SK-N-SH (cell line): ENCODE measurements at regions of chr11 and their contacts with region 1.

Region 1: GRCh38 chr11:35485656-35486322 is 39.6 kb downstream of the PAMR1 start:
- DNase-seq: peak; percentile 72
- H3K4me3 ChIP-seq: no peak overlapping the region; a peak in 1 of 4 replicates
- H3K27ac ChIP-seq: no peak overlapping the region
- H3K4me1 ChIP-seq: peaks cover 0 to 2% of the 10 kb centered on the region in 2 experiments; a peak in 1 of 4 replicates
- H3K27me3 ChIP-seq: no peaks in the 10 kb centered on the region
- CTCF ChIP-seq: peak; percentile 91
- EP300 ChIP-seq: no peak
- RAD21 ChIP-seq: peak; percentile 79

Region 2: DNA sequence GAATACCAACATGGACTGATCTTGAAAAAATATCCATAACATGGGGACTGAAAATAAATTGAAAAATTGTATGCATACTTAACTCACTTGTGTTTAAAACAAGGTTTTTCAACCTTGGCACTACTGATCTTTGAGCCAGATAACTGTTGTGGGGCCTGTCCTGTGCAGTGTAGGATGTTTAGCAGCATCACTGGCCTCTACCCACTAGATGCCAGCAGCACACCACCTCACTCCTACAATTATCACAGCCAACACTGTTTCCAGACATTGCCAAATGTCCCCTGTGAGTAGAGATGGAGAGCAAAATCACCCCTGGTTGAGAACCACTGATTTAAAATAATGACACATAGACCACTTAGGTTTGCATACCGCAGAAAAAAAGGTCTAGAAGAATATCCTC is 21.5 kb before region 1 on chr11:
- CTCF ChIA-PET with region 1: interaction called, 15 read pairs
- POLR2A ChIA-PET with region 1: no interaction called
- DNase-seq: peak; percentile 15
- H3K4me3 ChIP-seq: no peak overlapping the region
- H3K27ac ChIP-seq: no peak overlapping the region
- H3K4me1 ChIP-seq: no peaks in the 10 kb centered on the region
- H3K27me3 ChIP-seq: no peaks in the 10 kb centered on the region
- CTCF ChIP-seq: peak; percentile 62
- EP300 ChIP-seq: no peak
- RAD21 ChIP-seq: peak; percentile 66

Region 3: GRCh38 chr11:35496416-35496815 is 10.6 kb after region 1 on chr11:
- CTCF ChIA-PET with region 1: interaction called, 16 read pairs
- POLR2A ChIA-PET with region 1: interaction called, 7 read pairs
- DNase-seq: no peak
- H3K4me3 ChIP-seq: no peak overlapping the region
- H3K27ac ChIP-seq: no peak overlapping the region
- H3K4me1 ChIP-seq: peaks cover 0 to 8% of the 10 kb centered on the region in 2 experiments; a peak in 2 of 4 replicates
- H3K27me3 ChIP-seq: no peaks in the 10 kb centered on the region
- CTCF ChIP-seq: no peak
- EP300 ChIP-seq: no peak
- RAD21 ChIP-seq: no peak

Region 4: DNA sequence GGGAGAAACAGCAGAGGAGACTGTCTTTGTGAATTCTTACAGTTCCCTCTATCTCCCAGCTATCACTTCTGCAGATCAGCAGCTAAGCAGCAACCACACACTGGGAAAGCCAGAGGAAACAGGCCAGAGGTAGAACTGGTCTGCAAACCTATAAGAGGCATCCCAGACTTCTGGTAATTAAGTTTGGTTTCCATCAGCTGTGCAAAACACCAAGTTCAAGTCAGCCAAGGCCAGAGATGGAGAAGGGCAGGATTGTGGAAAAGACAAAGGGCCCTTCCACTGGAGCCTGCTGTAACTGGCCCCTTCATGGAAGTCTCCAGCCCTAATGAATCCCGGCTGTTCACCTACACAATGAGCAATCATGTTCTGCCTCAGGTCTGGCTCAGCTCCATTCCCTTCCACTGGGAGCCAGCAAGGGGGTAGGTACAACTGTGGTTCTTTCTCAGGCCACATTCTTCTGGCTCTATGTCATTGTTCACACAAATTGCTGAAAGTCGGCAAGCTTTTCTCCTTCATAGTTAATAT is 44.2 kb after region 1 on chr11:
- CTCF ChIA-PET with region 1: interaction called, 13 read pairs
- POLR2A ChIA-PET with region 1: no interaction called
- DNase-seq: peak; percentile 64
- H3K4me3 ChIP-seq: 0 out of 4 replicates have a peak overlapping the region, but pooled peaks of 1 of the 2 experiments have one; percentile 3
- H3K27ac ChIP-seq: peak overlapping the region; percentile 87 to 89
- H3K4me1 ChIP-seq: peaks cover 17 to 18% of the 10 kb centered on the region in 2 experiments
- H3K27me3 ChIP-seq: no peaks in the 10 kb centered on the region
- CTCF ChIP-seq: no peak
- EP300 ChIP-seq: peak in 1 of 2 experiments; percentile 87; a peak in 2 of 4 replicates
- RAD21 ChIP-seq: no peak; the same call in 1 of the 2 replicates

Region 5: DNA sequence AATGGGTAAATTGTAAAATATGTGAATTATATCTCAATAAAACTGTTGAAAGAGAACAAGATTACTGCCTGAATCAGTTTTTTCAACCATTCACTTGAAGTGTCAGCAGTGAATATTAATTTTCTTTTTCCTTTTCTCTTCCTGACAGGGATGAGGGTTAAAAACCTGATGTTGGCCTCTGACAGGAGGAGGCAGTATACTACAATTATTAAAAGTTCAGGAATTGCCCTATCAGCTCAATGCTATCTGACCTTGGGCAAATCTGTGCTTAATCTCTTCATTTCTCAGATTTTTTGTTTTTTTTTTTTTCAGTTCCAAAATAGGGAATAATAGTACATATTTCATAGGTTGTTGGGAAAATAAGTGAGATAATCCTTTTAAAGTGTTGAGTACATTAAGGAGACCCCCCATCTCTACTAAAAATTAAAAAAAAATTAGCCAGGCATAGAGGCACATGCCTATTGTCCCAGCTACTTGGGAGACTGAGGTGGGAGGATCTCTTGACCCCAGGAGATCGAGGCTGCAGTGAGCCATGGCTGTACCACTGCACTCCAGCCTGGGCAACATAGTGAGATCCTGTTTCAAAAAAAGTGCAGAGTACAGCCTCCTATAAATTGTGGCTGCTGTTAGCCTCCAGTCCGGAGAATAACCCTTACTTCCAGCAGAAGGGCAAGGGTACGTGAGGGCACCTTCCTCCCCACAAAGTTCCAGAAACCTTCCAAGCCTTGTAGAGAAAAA is 225.6 kb after region 1 on chr11:
- CTCF ChIA-PET with region 1: no interaction called
- POLR2A ChIA-PET with region 1: no interaction called
- DNase-seq: no peak
- H3K4me3 ChIP-seq: no peak overlapping the region
- H3K27ac ChIP-seq: no peak overlapping the region
- H3K4me1 ChIP-seq: no peaks in the 10 kb centered on the region
- H3K27me3 ChIP-seq: no peaks in the 10 kb centered on the region
- CTCF ChIP-seq: peak; percentile 49
- EP300 ChIP-seq: no peak
- RAD21 ChIP-seq: peak; percentile 36; the same call in 1 of the 2 replicates